Body of pancreas (tissue), 4 donors: ENCODE measurements at regions of chr10 and their contacts with region 1.

Region 1: GRCh38 chr10:35563261-35563891 is 41.8 kb upstream of the GJD4 start:
- DNase-seq: peak; percentile 59 to 66 (median 64)
- ATAC-seq: peak; percentile 75
- H3K4me3 ChIP-seq: no peak overlapping the region
- H3K27ac ChIP-seq: no peak overlapping the region
- H3K4me1 ChIP-seq: no peaks in the 10 kb centered on the region
- H3K27me3 ChIP-seq: no peaks in the 10 kb centered on the region
- CTCF ChIP-seq: peak; percentile 87 to 99 (median 91)
- POLR2A ChIP-seq: no peak

Region 2: DNA sequence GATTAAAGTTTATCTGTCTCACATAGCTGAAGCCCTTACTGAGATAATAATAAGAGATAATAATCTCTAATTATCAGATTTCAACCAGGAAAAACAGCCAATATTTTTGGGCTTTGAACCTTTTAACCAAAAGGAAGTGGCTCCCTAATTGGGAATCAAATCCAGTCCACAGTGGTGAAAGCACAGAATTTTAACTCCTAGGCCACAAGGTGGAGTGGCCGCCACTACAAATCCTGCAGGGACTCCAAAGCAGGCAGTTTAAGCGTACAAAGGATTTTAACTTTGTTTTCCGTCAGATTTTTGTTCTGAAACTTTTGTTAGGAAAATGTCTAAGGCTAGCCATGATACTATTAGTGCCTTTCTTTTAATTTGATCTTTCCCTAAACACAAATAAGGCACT is 326.6 kb before region 1 on chr10:
- intact Hi-C with region 1: loop called (anchors 10 kb)
- DNase-seq: no peak
- ATAC-seq: no peak
- H3K4me3 ChIP-seq: no peak overlapping the region
- H3K27ac ChIP-seq: no peak overlapping the region
- H3K4me1 ChIP-seq: no peaks in the 10 kb centered on the region
- H3K27me3 ChIP-seq: no peaks in the 10 kb centered on the region
- CTCF ChIP-seq: no peak
- POLR2A ChIP-seq: no peak